Activated CD8-positive, alpha-beta memory T cell treated with anti-CD3 and anti-CD28 coated beads, Interleukin-2, amount 10 ng/mL, durations not matched to agents 7 days and 5 days (primary cell): ENCODE measurements at regions of chr10 and their contacts with region 1.

Region 1: GRCh38 chr10:70880077-70880534 is 8.3 kb downstream of the PCBD1 start:
- DNase-seq: peak; percentile 86
- ATAC-seq: peak; percentile 93
- H3K4me3 Mint-ChIP-seq: no peak overlapping the region
- H3K27ac Mint-ChIP-seq: no peak overlapping the region
- H3K4me1 Mint-ChIP-seq: peaks cover 9% of the 10 kb centered on the region
- H3K27me3 Mint-ChIP-seq: no peaks in the 10 kb centered on the region

Region 2: GRCh38 chr10:70820976-70821755 is 58.9 kb before region 1 on chr10:
- CTCF ChIA-PET with region 1: interaction called, 33 read pairs
- DNase-seq: no peak
- ATAC-seq: peak; percentile 25
- H3K4me3 Mint-ChIP-seq: no peak overlapping the region
- H3K27ac Mint-ChIP-seq: no peak overlapping the region
- H3K4me1 Mint-ChIP-seq: peaks cover 21% of the 10 kb centered on the region
- H3K27me3 Mint-ChIP-seq: no peaks in the 10 kb centered on the region

Region 3: DNA sequence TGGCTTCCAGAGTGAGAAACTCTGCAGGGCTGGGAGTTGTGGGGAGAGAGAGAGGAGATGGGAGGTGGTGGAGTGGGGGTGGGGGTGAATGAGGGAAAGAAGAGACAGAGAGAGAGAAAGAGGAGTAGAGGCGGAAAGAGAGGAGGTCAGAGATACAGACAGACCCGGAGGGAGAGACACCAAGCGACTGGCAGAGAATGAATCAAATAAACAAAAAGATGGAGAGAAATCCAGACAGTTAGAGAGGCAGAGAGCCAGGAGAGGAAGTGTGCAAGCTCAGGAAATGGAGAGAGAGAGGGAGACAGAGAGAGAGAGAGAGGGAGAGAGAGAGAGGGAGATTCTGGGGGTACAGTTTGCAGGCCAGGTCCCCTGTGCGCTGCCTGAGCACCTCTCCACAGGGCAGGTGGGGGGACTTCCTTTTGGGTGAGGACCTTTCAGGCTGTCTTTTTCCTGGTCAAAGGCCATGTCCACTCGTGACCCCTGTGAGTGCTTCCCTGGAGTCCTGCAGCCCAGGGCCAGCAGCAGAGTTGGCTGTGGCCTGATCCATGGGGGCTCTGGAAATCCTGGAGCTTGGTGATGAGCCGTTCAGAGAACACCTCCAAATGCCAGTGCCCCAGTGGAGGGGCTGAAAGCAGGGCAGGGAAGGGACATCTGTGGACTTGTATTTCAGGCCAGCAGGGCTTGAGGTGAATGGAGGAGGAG is 33.2 kb after region 1 on chr10:
- CTCF ChIA-PET with region 1: no interaction called
- DNase-seq: no peak
- ATAC-seq: no peak
- H3K4me3 Mint-ChIP-seq: no peak overlapping the region
- H3K27ac Mint-ChIP-seq: no peak overlapping the region
- H3K4me1 Mint-ChIP-seq: no peaks in the 10 kb centered on the region
- H3K27me3 Mint-ChIP-seq: peaks cover 5% of the 10 kb centered on the region